ENCODE measurements at regions of chr2 and their contacts with region 1.

Region 1: DNA sequence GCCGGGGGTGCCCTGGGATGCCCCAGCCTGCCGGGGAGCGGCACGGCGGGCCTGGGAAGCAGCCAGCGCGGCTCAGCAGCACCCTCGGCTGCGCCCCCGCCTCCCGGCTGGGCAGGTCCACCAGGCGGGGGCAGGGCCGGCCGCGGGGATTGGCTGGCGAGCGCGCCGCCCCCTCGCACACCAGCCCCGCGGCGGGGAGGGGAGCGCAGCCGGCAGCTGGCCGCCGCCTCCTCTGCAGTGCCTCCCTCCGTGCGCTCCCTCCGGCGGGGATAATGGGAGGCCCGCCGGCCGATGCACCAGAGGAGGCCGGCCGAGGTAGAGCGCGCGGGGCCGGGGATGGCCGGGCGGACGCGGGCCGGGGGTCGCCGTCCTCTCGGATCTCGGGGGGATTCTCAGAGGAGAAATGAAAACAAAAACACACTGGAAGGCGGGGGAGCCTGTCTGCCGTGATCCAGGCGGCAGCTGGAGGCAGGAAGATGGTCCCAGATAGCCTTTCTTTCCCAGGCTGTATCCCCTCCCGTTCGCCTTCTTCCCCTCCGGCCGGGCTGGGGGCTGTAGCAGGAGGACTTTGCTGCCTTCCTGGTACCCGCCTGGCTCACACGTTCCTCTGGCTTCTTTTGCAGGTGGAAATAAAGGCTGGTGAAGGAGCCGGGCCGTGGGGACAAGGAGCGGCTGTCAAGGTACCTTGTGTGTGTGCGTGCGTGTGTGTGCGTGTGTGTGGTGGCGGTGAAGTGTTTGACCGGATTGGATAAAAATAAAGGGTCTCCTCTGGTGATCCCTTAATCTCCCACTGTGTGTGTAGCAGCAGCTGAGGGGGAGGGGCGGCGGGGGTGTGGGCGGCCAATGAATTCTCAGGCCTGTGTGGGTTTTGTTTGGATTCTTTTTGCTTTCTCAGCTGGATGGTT is 18.0 kb downstream of the TET3 start:
- DNase-seq: peak in 1 of 2 experiments; percentile 88
- H3K4me3 ChIP-seq: peak overlapping the region; percentile 70 to 91 (median 87)
- H3K27ac ChIP-seq: peak overlapping the region; percentile 73
- H3K4me1 ChIP-seq: peaks cover 14 to 42% (median 26%) of the 10 kb centered on the region in 4 experiments
- H3K27me3 ChIP-seq: no peaks in the 10 kb centered on the region
- CTCF ChIP-seq: no peak
- EP300 ChIP-seq: no peak
- POLR2A ChIP-seq: peak in 1 of 2 experiments; percentile 47; a peak in 2 of 3 replicates
- RAD21 ChIP-seq: 0 out of 4 replicates have a peak, but pooled peaks of 1 of the 2 experiments have one; percentile 4

Region 2: GRCh38 chr2:73812635-73813034 is 190.1 kb before region 1 on chr2:
- CTCF ChIA-PET with region 1: no interaction called
- POLR2A ChIA-PET with region 1: no interaction called
- DNase-seq: no peak
- H3K4me3 ChIP-seq: no peak overlapping the region
- H3K27ac ChIP-seq: no peak overlapping the region
- H3K4me1 ChIP-seq: no peaks in the 10 kb centered on the region
- H3K27me3 ChIP-seq: peaks cover 0 to 16% (median 3%) of the 10 kb centered on the region in 4 experiments; a peak in 6 of 7 replicates
- CTCF ChIP-seq: no peak
- EP300 ChIP-seq: no peak
- POLR2A ChIP-seq: no peak
- RAD21 ChIP-seq: no peak

Region 3: DNA sequence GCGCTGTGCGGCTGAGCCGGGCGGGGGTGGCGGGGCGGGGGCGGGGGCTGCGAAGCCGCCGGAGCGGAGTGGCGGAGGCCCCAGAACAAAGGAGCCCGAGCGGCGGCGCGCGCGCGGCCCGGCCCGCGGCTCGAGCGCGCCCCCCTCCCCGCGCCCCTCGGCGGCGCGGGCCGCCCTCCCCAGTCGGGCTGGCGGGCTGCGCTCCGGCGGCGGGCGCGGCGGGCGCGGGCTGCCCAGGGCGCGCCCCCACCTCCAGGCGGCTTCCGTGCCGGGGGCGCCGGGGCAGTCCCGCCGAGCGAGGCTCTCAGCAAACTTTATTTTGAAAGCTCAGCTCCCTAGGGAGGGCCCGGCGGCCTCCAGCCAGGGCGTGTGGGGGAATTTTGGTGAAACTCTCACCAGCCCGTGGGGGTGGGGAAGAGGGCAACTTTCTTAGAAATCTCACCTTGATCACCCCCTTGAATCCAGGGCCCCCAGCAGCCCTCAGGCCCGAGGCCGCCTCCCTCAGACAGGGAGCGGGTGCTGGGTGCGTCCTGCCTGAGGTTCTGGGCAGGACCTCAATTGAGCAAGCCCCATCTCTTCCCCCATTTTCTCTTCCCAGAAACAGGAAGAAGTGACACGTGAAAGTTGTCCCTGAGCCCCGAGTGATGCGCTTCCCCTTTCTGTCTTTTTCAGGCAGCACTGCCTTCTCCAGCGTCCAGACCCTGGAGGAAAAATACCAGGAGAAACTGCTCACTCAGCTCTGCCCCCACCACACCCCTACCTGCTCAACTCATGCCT is 17.2 kb before region 1 on chr2:
- CTCF ChIA-PET with region 1: interaction called, 4 read pairs
- POLR2A ChIA-PET with region 1: interaction called, 94 read pairs
- DNase-seq: no peak
- H3K4me3 ChIP-seq: peak overlapping the region; percentile 48 to 69 (median 56)
- H3K27ac ChIP-seq: no peak overlapping the region
- H3K4me1 ChIP-seq: peaks cover 11 to 37% (median 21%) of the 10 kb centered on the region in 4 experiments
- H3K27me3 ChIP-seq: peaks cover 14 to 33% (median 24%) of the 10 kb centered on the region in 4 experiments
- CTCF ChIP-seq: no peak
- EP300 ChIP-seq: no peak
- POLR2A ChIP-seq: peak in 1 of 2 experiments; percentile 10; a peak in 2 of 3 replicates
- RAD21 ChIP-seq: no peak

Region 4: DNA sequence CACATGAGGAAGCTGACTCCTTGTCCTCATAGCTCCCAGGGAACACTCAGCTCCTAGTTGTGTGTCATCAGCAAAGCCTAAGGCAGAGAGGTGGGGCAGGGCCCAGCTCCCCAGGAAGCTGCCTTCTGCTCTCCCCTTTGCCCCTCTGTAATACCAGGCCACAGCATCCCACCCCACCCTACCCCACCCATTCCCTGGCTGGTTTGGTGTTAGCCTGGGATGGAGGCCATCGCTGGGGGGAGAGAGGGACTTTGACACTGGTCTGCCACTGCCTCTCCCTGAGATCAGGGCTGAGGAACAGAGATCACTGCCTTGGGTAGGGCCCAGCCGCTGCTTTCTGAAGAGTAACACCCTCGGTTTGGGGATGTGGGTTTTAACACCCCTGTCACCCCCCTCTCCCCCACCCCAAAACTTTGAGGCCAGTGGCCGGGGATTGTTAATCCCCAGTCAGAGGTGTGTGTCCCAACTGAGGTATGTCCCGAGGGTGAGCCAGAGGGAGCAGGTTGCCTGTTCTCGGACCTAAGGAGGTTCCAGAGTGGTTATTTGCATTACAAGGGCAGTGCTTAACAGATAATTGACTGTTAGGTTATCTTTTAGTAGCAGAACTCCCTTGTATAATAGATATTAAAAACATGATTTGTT is 23.4 kb after region 1 on chr2:
- CTCF ChIA-PET with region 1: interaction called, 5 read pairs
- POLR2A ChIA-PET with region 1: interaction called, 16 read pairs
- DNase-seq: no peak
- H3K4me3 ChIP-seq: peak overlapping the region in 1 of 4 experiments; percentile 23; a peak in 1 of 8 replicates
- H3K27ac ChIP-seq: no peak overlapping the region
- H3K4me1 ChIP-seq: peaks cover 10 to 20% (median 16%) of the 10 kb centered on the region in 4 experiments
- H3K27me3 ChIP-seq: no peaks in the 10 kb centered on the region
- CTCF ChIP-seq: no peak
- EP300 ChIP-seq: no peak
- POLR2A ChIP-seq: no peak
- RAD21 ChIP-seq: no peak

Region 5: GRCh38 chr2:74080346-74080745 is 77.6 kb after region 1 on chr2:
- CTCF ChIA-PET with region 1: interaction called, 11 read pairs
- POLR2A ChIA-PET with region 1: interaction called, 3 read pairs
- DNase-seq: no peak
- H3K4me3 ChIP-seq: no peak overlapping the region
- H3K27ac ChIP-seq: no peak overlapping the region
- H3K4me1 ChIP-seq: no peaks in the 10 kb centered on the region
- H3K27me3 ChIP-seq: no peaks in the 10 kb centered on the region
- CTCF ChIP-seq: peak; percentile 11 to 53 (median 48)
- EP300 ChIP-seq: no peak
- POLR2A ChIP-seq: no peak
- RAD21 ChIP-seq: peak; percentile 72 to 84

Measured in H1 (cell line).